MCF 10A (cell line): ENCODE measurements at regions of chr6 and their contacts with region 1.

Region 1: GRCh38 chr6:28104392-28105244 is 19.8 kb upstream of the ZSCAN16 start:
- DNase-seq: peak; percentile 78
- H3K4me3 Mint-ChIP-seq: peak overlapping the region; percentile 83
- H3K27ac Mint-ChIP-seq: peak overlapping the region; percentile 63
- H3K4me1 Mint-ChIP-seq: no peaks in the 10 kb centered on the region
- H3K27me3 Mint-ChIP-seq: no peaks in the 10 kb centered on the region
- CTCF ChIP-seq: peak; percentile 59

Region 2: DNA sequence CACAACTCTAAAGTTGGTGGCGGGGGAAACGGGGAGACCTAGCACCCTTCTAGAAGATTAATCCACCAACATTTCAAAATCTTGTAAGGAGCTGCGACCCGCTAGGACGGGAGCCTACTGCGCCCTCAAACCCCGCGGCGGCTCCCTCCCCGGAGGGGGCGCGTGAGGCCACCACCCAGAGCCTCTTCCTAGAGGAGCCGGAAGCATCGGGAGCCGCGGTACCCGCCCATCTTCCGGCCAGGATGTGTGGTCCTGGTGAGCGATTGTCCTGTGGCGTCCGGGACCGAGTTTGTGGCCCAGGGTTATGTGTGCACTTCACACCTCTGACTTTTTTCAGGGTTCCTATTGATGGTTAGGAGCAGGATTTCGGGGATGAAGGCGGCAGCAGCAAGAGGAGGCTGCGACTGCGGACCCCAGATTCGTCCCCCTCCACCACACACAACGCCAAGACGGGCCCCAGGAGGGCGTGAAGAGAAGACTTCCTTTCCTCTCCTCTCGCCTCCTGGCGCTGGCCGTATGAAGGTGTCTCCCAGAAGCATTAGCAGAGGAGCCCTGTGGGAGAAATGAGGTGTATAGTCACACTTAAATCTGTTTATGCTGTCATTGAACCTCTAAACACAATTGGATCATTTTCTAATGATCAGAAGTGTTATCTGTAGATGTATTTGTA is 13.6 kb before region 1 on chr6:
- CTCF ChIA-PET with region 1: interaction called, 4 read pairs
- POLR2A ChIA-PET with region 1: interaction called, 12 read pairs
- intact Hi-C with region 1: no loop called
- DNase-seq: no peak
- H3K4me3 Mint-ChIP-seq: no peak overlapping the region
- H3K27ac Mint-ChIP-seq: no peak overlapping the region
- H3K4me1 Mint-ChIP-seq: no peaks in the 10 kb centered on the region
- H3K27me3 Mint-ChIP-seq: no peaks in the 10 kb centered on the region
- CTCF ChIP-seq: no peak

Region 3: DNA sequence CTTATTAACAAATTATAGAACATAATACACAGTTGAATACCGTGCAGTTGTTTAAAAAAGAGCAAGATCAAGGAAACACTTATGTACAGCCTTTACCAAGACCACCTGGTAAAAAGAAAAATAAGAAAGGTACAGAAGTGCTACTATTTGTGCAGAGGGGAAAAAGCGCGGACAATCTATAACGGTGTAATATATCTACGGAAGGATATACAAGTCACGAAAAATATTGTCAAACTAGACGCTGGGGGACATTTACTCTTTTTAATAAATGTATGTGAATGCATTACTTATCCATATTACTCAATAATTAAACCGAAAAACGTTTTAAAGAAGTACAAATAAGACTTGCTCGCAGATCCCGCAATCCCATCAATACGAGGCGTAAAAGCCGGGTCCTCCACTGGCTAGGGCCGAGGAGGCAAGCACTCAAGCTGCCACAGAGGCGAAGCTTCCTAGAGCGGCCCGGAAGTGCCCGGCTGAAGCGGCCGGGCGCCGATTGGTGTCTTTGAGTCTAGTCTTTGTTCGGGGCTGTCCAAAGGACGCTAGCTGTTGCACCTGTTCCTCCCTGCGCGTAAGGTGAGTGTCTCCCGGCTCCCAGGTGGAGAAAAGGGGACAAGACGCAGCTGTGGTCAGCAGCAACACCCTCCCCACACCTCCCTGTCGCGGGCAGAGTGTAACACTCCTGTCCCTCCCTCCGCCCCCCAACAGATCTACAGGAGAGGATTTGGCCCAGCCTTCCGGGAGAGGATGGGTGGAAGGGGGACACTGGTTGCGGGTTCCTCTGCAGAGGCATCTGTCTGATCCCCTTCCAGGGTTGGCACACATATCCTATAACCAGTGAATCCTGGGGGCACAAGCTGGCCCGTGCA is 19.7 kb after region 1 on chr6 and contains the start of gene ZSCAN16:
- CTCF ChIA-PET with region 1: no interaction called
- POLR2A ChIA-PET with region 1: interaction called, 23 read pairs
- intact Hi-C with region 1: no loop called
- DNase-seq: peak; percentile 85
- H3K4me3 Mint-ChIP-seq: peak within 1 kb of the TSS; percentile 84
- H3K27ac Mint-ChIP-seq: peak within 1 kb of the TSS; percentile 87
- H3K4me1 Mint-ChIP-seq: peaks cover 41% of the 10 kb centered on the region
- H3K27me3 Mint-ChIP-seq: no peaks in the 10 kb centered on the region
- CTCF ChIP-seq: no peak
- total RNA-seq, gene ZSCAN16: 2.6 and 4.4 TPM in 2 replicates